Heart left ventricle (tissue), 16 donors: ENCODE measurements at regions of chr12 and their contacts with region 1.

Region 1: GRCh38 chr12:93894391-93895088 is 217.4 kb downstream of the CRADD start:
- DNase-seq: peak; percentile 87 to 96 (median 91)
- ATAC-seq: peak; percentile 83 to 96 (median 94)
- H3K4me3 ChIP-seq: peak overlapping the region in 9 of 12 donors; percentile 4 to 41 (median 22)
- H3K27ac ChIP-seq: peak overlapping the region; percentile 79 to 90 (median 86)
- H3K4me1 ChIP-seq: peaks cover 10 to 50% (median 36%) of the 10 kb centered on the region in 12 donors
- H3K27me3 ChIP-seq: no peaks in the 10 kb centered on the region
- CTCF ChIP-seq: peak in 1 of 12 donors; percentile 22
- POLR2A ChIP-seq: peak in 1 of 2 donors; percentile 16

Region 2: GRCh38 chr12:93577222-93577795 is 317.2 kb before region 1 on chr12:
- intact Hi-C with region 1: loop called in 4 of 10 experiments (anchors 5 to 10 kb)
- DNase-seq: no peak
- ATAC-seq: no peak
- H3K4me3 ChIP-seq: peak overlapping the region in 2 of 12 donors; percentile 66 to 71
- H3K27ac ChIP-seq: peak overlapping the region in 4 of 12 donors; percentile 21 to 98 (median 29)
- H3K4me1 ChIP-seq: peaks cover 0 to 66% (median 41%) of the 10 kb centered on the region in 12 donors
- H3K27me3 ChIP-seq: peaks cover 0 to 26% (median 0%) of the 10 kb centered on the region in 9 donors
- CTCF ChIP-seq: no peak
- POLR2A ChIP-seq: no peak

Region 3: DNA sequence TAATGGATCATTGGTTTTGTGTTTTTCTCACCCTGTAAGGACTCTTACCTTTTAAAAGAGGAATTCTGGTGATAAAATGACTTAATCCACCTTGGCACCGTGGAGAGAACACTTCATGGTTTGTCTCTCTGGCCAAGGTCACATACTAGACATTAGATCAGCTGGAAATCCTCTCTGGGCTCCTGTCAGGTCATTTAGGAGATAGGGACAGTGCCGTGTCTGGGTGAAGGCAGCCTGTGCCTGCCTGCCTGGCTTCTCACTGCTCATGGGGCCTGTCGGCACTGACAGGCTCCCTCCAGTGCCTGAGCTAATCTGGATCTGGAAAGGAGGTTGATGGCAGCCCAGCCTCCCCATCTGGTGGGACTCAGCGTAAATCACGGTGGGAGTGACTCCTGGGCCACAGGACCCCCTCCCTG is 211.7 kb before region 1 on chr12:
- intact Hi-C with region 1: loop called in 5 of 10 experiments (anchors 5 to 10 kb)
- DNase-seq: peak in 4 of 5 donors; percentile 55 to 78 (median 71)
- ATAC-seq: peak; percentile 82 to 91 (median 86)
- H3K4me3 ChIP-seq: peak overlapping the region in 1 of 12 donors; percentile 8
- H3K27ac ChIP-seq: peak overlapping the region; percentile 64 to 100 (median 84)
- H3K4me1 ChIP-seq: peaks cover 0 to 82% (median 37%) of the 10 kb centered on the region in 12 donors
- H3K27me3 ChIP-seq: no peaks in the 10 kb centered on the region
- CTCF ChIP-seq: no peak
- POLR2A ChIP-seq: no peak

Region 4: DNA sequence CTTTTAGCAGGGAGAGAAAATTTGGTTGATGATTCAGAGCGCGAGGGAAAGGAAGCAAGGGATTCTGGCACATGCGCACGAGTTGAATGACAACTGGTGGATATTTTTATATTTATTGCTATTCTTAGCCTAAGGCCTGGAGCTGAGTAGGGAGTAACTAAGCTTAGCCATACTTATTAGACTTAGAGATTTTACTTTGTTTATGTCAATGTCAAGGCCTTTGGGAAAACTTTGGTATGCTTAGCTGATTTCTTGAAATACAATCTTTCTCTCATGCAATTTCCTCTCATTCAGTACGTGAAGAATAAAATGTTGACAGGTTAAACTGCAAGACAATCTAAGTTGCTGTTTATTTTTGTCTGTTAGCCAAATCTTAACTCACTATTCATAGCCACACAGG is 116.2 kb before region 1 on chr12:
- intact Hi-C with region 1: loop called in 4 of 10 experiments (anchors 10 kb)
- DNase-seq: peak in 4 of 5 donors; percentile 66 to 80 (median 72)
- ATAC-seq: peak; percentile 83 to 92 (median 88)
- H3K4me3 ChIP-seq: peak overlapping the region in 5 of 12 donors; percentile 1 to 12 (median 9)
- H3K27ac ChIP-seq: peak overlapping the region; percentile 74 to 92 (median 84)
- H3K4me1 ChIP-seq: peaks cover 12 to 54% (median 45%) of the 10 kb centered on the region in 12 donors
- H3K27me3 ChIP-seq: no peaks in the 10 kb centered on the region
- CTCF ChIP-seq: no peak
- POLR2A ChIP-seq: no peak

Region 5: DNA sequence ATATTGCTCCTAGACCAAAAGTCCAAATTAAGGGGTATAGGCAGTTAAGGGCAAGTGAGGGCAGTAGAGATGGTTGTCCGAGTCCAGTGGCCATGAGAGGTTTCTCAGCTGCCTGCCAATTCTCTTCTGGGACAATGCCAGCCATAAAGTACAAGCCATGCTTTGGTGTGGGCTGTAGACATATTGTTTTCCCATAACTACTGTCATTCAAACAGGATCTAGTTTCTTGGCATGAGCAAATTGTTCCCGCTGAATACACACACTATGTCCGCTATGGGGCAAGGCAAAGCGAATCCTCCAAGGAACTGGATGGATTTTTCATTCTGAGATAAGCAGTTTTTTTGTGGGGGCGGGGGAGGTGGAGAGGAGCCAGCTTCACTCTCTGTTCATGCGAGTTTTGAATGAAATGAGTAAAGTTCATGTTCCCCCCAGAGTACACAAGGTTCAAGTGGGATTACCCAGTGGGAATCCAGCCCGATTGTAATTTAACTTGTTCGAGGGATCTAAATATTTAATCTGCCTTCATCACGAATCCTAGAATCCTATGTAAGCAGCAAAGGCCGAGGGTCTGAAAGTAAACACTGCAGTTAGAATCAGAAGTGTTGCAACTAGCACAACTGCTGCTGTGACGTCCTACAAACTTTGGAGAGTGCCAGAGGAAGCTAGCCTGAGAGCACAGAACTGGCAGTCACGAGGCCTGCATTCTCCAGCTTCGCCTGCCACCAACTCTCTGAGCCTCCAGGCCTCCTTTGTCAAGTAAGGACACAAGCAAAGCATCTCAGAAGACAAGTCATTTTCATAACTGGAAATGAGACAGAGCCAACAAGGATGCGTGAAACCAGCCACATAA is 80.3 kb before region 1 on chr12:
- intact Hi-C with region 1: loop called in 4 of 10 experiments (anchors 2 to 10 kb)
- DNase-seq: peak; percentile 79 to 91 (median 80)
- ATAC-seq: peak; percentile 91 to 93 (median 92)
- H3K4me3 ChIP-seq: peak overlapping the region in 6 of 12 donors; percentile 6 to 37 (median 14)
- H3K27ac ChIP-seq: peak overlapping the region; percentile 81 to 95 (median 88)
- H3K4me1 ChIP-seq: peaks cover 9 to 68% (median 50%) of the 10 kb centered on the region in 12 donors
- H3K27me3 ChIP-seq: no peaks in the 10 kb centered on the region
- CTCF ChIP-seq: no peak
- POLR2A ChIP-seq: no peak

Region 6: DNA sequence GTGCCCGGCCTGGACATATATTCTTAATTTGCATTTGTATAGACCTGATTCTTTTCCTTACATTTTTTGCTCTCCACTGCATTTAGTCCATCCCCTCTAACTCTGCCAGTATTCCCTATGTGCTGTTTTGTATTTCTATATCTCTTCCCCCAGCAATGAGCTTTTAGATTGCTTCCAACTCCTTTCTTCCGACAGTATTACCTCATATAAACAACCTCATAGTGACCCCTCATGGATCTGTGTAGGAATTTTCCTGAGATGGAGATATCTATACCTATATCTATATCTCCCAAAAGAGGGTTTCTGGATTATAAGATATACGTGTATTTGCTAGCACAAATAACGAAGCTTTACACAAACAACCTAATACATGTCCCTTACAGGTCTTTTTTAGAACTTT is 55.5 kb before region 1 on chr12:
- intact Hi-C with region 1: loop called in 1 of 10 experiments (anchors 10 kb)
- DNase-seq: no peak
- ATAC-seq: no peak
- H3K4me3 ChIP-seq: no peak overlapping the region
- H3K27ac ChIP-seq: no peak overlapping the region
- H3K4me1 ChIP-seq: peaks cover 0 to 30% (median 9%) of the 10 kb centered on the region in 12 donors
- H3K27me3 ChIP-seq: no peaks in the 10 kb centered on the region
- CTCF ChIP-seq: no peak
- POLR2A ChIP-seq: no peak

Region 7: DNA sequence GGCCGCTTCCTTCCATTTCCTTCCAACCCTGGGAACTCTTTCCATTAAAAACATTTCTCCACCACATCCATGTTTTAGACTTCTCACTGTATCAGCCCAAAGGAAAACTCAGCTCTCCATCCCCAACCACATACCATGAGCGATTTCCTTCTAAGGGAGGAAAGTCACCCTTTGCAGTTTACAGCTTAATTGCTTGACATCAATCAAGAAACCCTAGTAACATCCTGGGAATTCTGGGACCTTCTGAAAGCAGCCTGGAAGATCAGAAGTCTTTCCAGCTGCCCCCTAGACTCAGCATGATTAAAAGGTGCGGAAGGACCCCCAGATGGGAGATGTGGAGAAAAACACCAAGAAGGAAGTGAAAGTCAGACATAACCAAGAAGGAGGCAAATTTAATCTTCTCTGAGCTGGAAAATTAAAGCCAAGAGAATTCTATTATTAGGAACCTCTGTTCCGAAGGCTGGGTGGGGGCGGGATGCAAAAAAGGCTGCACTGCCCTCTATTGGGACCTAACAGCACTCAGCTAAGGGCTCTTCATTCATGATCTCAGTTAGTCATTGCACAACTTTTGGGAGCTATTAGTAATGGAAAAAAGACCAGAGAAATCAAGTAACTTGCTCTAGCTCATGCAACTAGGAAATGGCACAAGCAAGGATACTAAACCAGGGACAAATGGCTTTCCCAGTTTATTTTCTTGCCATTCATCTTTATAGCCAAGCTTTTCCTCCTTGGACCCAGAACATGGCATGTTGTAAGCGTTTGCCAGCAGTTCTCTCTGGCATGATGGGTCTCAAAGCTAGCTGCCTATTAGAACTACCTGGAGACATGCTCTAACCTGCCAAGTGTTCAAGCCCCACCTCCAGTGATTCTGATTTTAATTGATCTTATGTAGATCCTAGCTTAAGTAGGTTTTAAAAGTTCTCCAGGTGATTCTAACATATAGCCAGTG is 180.7 kb after region 1 on chr12:
- intact Hi-C with region 1: loop called in 5 of 10 experiments (anchors 2 to 10 kb)
- DNase-seq: peak in 4 of 5 donors; percentile 73 to 80 (median 77)
- ATAC-seq: peak; percentile 76 to 90 (median 84)
- H3K4me3 ChIP-seq: peak overlapping the region in 6 of 12 donors; percentile 4 to 36 (median 10)
- H3K27ac ChIP-seq: peak overlapping the region; percentile 74 to 96 (median 84)
- H3K4me1 ChIP-seq: peaks cover 0 to 36% (median 23%) of the 10 kb centered on the region in 12 donors
- H3K27me3 ChIP-seq: no peaks in the 10 kb centered on the region
- CTCF ChIP-seq: peak; percentile 59 to 88 (median 69)
- POLR2A ChIP-seq: no peak